ENCODE measurements at regions of chr15 and their contacts with region 1.

Region 1: DNA sequence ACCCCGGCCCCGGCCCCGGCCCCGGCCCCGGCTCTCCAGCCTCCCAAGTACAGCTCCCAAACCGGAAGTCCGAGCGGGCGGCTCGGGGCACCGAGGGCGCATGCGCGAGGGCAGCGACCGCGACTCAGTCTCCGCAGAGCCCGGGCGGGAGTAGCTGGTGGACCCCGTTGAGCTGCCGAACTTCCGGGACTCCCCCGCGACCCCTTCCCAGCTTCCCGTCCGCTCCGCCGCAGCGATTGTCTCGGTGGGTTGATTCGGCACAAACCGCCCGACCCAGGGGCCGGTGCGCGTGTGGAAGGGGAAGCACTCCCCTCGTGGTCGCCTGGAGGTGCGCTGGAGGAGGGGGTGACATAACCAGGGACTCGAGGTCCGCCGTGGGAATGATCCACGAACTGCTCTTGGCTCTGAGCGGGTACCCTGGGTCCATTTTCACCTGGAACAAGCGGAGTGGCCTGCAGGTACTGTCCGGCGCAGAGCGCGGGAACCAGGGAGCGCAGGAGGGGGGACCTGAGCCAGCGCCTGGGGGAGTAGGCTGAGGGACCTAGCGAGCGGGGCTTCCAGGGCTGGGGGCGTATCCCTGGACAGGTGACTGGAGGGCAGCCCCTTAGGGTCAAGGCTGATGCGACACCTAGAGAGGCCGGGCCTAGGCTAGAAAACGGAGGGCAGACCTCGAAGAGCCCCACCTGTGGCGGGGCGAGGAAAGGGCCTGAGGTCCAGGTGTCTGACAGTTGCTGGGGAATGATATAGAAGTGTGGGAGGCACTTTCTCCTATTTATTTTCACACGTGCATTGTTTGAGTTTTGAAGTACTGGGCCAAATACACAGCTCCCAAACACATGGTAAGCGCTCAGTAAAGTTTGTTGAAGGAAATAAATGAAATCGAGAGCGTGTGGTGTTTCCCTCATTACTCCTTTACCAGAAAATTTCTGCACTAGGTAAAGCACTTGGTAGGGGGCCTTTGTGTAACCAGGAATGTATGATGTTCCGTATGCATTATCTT is at the starts of genes TUBGCP4 and ZSCAN29:
- DNase-seq: peak; percentile 87
- ATAC-seq: peak; percentile 81
- H3K4me3 ChIP-seq: peak within 1 kb of the TSS; percentile 65 to 94 (median 83)
- H3K4me3 Mint-ChIP-seq: peak within 1 kb of the TSS; percentile 94
- H3K27ac ChIP-seq: peak within 1 kb of the TSS; percentile 43 to 79
- H3K27ac Mint-ChIP-seq: peak within 1 kb of the TSS; percentile 92
- H3K4me1 ChIP-seq: peaks cover 31 to 33% of the 10 kb centered on the region in 2 donors
- H3K4me1 Mint-ChIP-seq: peaks cover 58% of the 10 kb centered on the region
- H3K27me3 ChIP-seq: no peaks in the 10 kb centered on the region
- H3K27me3 Mint-ChIP-seq: no peaks in the 10 kb centered on the region
- CTCF ChIP-seq: peak; percentile 48
- total RNA-seq, gene TUBGCP4: 24.0 and 31.6 TPM in 2 replicates
- total RNA-seq, gene ZSCAN29: 51.5 and 54.4 TPM in 2 replicates

Region 2: DNA sequence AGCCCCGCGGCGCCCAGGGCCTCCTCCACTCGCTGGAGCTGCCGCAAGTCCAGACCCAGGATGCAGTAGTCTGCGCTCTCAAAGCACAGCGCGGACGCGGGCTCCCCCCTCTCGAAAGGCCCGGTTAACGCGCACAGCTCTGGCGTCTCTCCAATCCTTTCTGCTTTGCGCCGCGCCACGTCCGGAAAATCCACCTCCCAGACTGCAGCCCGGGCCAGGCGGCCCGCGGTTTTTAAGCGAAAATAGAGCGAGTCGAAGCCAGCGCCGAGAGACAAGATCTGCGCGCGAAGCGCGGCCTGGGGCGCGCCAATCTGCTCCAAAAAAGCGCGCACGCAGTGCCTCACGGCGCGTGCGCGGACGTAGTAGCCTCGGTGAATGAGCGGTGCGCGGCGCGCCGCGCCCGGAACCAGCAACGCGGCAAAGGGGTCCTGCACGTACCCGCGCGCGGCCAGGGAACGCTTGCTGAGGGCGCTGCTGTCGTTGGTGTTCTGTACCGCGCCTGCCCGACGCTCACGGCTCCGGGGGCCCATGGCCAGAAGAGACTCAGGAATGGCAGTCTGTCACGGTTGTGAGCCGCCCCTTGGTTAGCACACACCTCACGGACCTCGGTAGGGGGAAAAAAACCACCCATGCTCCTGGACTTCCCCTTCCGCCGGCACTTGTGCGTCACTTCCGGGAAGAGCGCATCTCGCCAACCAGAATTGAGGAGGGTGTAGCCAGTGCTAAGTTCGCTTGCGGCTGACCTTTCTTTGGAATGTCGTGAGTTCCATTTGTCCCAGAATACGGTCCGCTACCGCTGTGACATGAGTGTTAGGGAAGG is 41.1 kb before region 1 on chr15 and contains the start of gene LCMT2:
- CTCF ChIA-PET with region 1: interaction called, 3 read pairs
- POLR2A ChIA-PET with region 1: no interaction called
- intact Hi-C with region 1: loop called (anchors 2 kb)
- DNase-seq: peak; percentile 98
- ATAC-seq: peak; percentile 88
- H3K4me3 ChIP-seq: peak within 1 kb of the TSS; percentile 70 to 88 (median 84)
- H3K4me3 Mint-ChIP-seq: peak within 1 kb of the TSS; percentile 99
- H3K27ac ChIP-seq: peak within 1 kb of the TSS; percentile 94 to 98
- H3K27ac Mint-ChIP-seq: peak within 1 kb of the TSS; percentile 100
- H3K4me1 ChIP-seq: peaks cover 22 to 23% of the 10 kb centered on the region in 2 donors
- H3K4me1 Mint-ChIP-seq: peaks cover 32% of the 10 kb centered on the region
- H3K27me3 ChIP-seq: no peaks in the 10 kb centered on the region
- H3K27me3 Mint-ChIP-seq: no peaks in the 10 kb centered on the region
- CTCF ChIP-seq: peak; percentile 9
- total RNA-seq, gene LCMT2: 12.8 and 16.2 TPM in 2 replicates

Region 3: DNA sequence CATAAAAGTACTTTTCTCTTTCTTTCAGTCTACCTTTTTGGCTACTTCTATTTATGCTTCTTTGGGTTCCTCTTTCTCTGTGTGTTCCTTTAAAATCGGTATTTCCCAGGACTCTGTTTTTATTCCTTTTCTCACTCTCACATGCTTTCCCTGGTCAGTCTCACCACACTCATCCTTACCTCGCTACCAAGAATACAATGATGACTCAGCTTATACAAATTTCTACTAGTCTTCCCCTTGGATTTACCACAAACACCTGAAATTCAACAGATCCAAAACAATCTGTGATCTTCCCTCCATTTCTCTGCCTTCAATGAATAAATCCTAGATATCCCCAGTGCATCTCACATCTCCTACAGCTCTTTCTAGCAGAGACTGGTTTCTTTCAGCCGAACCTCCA is 52.5 kb after region 1 on chr15:
- CTCF ChIA-PET with region 1: no interaction called
- POLR2A ChIA-PET with region 1: no interaction called
- intact Hi-C with region 1: no loop called
- DNase-seq: no peak
- ATAC-seq: no peak
- H3K4me3 ChIP-seq: no peak overlapping the region
- H3K4me3 Mint-ChIP-seq: no peak overlapping the region
- H3K27ac ChIP-seq: no peak overlapping the region
- H3K27ac Mint-ChIP-seq: no peak overlapping the region
- H3K4me1 ChIP-seq: no peaks in the 10 kb centered on the region
- H3K4me1 Mint-ChIP-seq: no peaks in the 10 kb centered on the region
- H3K27me3 ChIP-seq: no peaks in the 10 kb centered on the region
- H3K27me3 Mint-ChIP-seq: no peaks in the 10 kb centered on the region
- CTCF ChIP-seq: no peak

Region 4: GRCh38 chr15:43492673-43493601 is 121.7 kb after region 1 on chr15 and contains the start of gene TP53BP1:
- CTCF ChIA-PET with region 1: interaction called, 3 read pairs
- POLR2A ChIA-PET with region 1: no interaction called
- intact Hi-C with region 1: loop called (anchors 2 kb)
- DNase-seq: peak; percentile 96
- ATAC-seq: peak; percentile 99
- H3K4me3 ChIP-seq: peak within 1 kb of the TSS; percentile 76 to 92 (median 80)
- H3K4me3 Mint-ChIP-seq: peak within 1 kb of the TSS; percentile 92
- H3K27ac ChIP-seq: peak within 1 kb of the TSS; percentile 70 to 98
- H3K27ac Mint-ChIP-seq: peak within 1 kb of the TSS; percentile 95
- H3K4me1 ChIP-seq: peaks cover 11% of the 10 kb centered on the region in 2 donors
- H3K4me1 Mint-ChIP-seq: peaks cover 23% of the 10 kb centered on the region
- H3K27me3 ChIP-seq: no peaks in the 10 kb centered on the region
- H3K27me3 Mint-ChIP-seq: no peaks in the 10 kb centered on the region
- CTCF ChIP-seq: no peak
- total RNA-seq, gene TP53BP1: 70.5 and 88.4 TPM in 2 replicates

Region 5: GRCh38 chr15:44157685-44158099 is 786.4 kb after region 1 on chr15:
- CTCF ChIA-PET with region 1: no interaction called
- POLR2A ChIA-PET with region 1: no interaction called
- intact Hi-C with region 1: no loop called
- DNase-seq: no peak
- ATAC-seq: no peak
- H3K4me3 ChIP-seq: no peak overlapping the region
- H3K4me3 Mint-ChIP-seq: no peak overlapping the region
- H3K27ac ChIP-seq: no peak overlapping the region
- H3K27ac Mint-ChIP-seq: no peak overlapping the region
- H3K4me1 ChIP-seq: no peaks in the 10 kb centered on the region
- H3K4me1 Mint-ChIP-seq: no peaks in the 10 kb centered on the region
- H3K27me3 ChIP-seq: peaks cover 0 to 8% (median 4%) of the 10 kb centered on the region in 4 experiments
- H3K27me3 Mint-ChIP-seq: peaks cover 25% of the 10 kb centered on the region
- CTCF ChIP-seq: no peak

Measured in B cell (primary cell).